ENCODE measurements at regions of chr1 and their contacts with region 1.

Region 1: DNA sequence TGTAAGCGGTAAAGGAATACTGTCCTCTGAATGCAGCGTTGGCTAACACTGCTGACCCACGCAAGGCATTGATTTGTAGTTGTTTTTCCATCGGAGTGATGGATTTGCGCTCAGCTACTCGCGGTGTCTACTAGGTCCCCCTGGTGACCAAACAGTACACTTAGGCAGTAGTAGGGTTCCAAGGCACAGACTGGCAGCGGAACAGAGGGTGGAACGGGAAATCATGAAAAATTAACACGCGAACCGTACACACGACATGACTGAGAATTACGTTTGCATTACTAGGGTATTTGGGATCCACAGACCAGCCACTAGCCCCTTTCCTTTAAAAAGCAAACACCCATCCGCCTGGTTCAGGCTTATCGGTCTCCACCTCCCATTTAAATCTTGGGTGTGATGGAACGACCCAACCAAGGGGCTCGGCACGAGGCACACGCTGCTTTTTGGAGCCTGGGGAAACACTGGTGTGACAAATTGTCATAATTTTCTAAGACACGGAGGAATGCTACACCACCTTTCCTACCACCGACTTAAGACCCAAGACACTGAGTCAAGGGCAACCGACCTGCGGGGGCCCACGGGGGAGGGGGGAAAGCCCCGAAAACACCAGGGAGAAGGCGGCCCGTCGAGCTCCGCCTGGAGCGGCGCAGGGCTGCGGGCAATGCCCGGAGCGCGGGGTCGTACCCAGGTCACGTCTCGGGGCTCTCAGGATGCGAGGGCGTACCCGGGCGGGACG is 699 bp downstream of the DIPK1A start:
- DNase-seq: peak; percentile 44 to 90 (median 57)
- ATAC-seq: peak; percentile 53
- H3K4me3 ChIP-seq: peak overlapping the region; percentile 88
- H3K4me3 Mint-ChIP-seq: peak overlapping the region; percentile 96
- H3K27ac ChIP-seq: peak overlapping the region; percentile 85 to 99
- H3K27ac Mint-ChIP-seq: peak overlapping the region; percentile 99
- H3K4me1 ChIP-seq: peaks cover 66% of the 10 kb centered on the region
- H3K4me1 Mint-ChIP-seq: peaks cover 43% of the 10 kb centered on the region
- H3K27me3 ChIP-seq: no peaks in the 10 kb centered on the region
- H3K27me3 Mint-ChIP-seq: no peaks in the 10 kb centered on the region
- CTCF ChIP-seq: peak; percentile 78

Region 2: DNA sequence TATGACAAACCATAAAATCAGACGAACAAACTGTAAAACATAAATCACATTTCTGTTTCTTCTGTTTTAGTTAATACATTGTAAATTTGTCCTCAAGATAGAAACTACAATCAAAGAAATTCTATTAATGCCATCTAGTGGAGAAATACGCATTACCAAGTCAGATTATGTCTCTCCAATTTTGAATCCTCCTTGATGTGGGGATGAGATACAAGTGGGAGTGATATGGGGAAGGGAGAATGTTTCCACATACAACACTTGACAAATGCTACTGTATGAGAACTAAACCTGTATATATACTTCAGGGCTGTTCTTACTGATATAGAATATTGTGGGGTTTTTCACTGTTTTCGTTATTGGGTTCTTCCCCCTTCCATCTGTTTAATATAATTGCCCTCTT is 1558.5 kb before region 1 on chr1:
- CTCF ChIA-PET with region 1: no interaction called
- POLR2A ChIA-PET with region 1: no interaction called
- intact Hi-C with region 1: no loop called
- DNase-seq: no peak
- ATAC-seq: no peak
- H3K4me3 ChIP-seq: no peak overlapping the region
- H3K4me3 Mint-ChIP-seq: no peak overlapping the region
- H3K27ac ChIP-seq: no peak overlapping the region
- H3K27ac Mint-ChIP-seq: no peak overlapping the region
- H3K4me1 ChIP-seq: peaks cover 10% of the 10 kb centered on the region
- H3K4me1 Mint-ChIP-seq: peaks cover 5% of the 10 kb centered on the region
- H3K27me3 ChIP-seq: peaks cover 12 to 38% of the 10 kb centered on the region in 2 experiments
- H3K27me3 Mint-ChIP-seq: peaks cover 63% of the 10 kb centered on the region
- CTCF ChIP-seq: peak; percentile 45

Region 3: DNA sequence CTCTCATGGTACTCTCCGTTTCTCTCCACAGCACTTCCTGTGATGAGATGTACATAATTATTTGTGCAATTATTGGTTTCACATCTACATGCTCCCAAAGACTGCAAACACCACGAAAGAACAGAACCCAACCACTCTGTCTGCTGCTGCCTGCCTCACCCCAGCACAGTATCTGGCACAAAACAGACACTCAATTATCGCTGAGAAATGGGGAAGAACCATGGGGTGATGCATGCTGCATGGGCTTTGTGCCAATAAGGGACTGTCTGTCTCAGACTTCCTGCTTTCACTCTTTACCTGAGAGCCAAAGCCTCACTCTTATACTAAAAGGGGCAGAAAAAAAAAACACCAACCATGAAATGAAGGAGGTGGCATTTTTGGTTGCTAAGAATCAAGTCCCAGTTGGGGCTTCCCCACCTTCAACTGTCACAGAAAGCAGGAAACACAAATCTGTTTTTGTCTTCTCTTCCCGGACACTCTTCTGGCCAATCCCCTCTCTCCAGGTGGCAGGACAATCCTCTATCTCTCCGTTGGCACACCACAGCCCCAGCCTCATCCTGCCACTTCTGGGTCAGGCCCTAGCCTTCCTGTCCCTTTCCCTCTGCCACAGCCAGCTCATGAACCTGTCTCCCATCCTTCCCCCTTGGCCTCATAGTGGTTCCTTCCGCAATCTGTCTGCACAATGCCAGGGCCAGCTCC is 1156.6 kb before region 1 on chr1:
- CTCF ChIA-PET with region 1: no interaction called
- POLR2A ChIA-PET with region 1: no interaction called
- intact Hi-C with region 1: loop called in 1 of 2 experiments (anchors 5 kb)
- DNase-seq: peak; percentile 49 to 94 (median 68)
- ATAC-seq: peak; percentile 54
- H3K4me3 ChIP-seq: peak overlapping the region; percentile 40
- H3K4me3 Mint-ChIP-seq: peak overlapping the region; percentile 58
- H3K27ac ChIP-seq: peak overlapping the region; percentile 97 to 99
- H3K27ac Mint-ChIP-seq: peak overlapping the region; percentile 94
- H3K4me1 ChIP-seq: peaks cover 43% of the 10 kb centered on the region
- H3K4me1 Mint-ChIP-seq: peaks cover 40% of the 10 kb centered on the region
- H3K27me3 ChIP-seq: no peaks in the 10 kb centered on the region
- H3K27me3 Mint-ChIP-seq: no peaks in the 10 kb centered on the region
- CTCF ChIP-seq: no peak

Region 4: DNA sequence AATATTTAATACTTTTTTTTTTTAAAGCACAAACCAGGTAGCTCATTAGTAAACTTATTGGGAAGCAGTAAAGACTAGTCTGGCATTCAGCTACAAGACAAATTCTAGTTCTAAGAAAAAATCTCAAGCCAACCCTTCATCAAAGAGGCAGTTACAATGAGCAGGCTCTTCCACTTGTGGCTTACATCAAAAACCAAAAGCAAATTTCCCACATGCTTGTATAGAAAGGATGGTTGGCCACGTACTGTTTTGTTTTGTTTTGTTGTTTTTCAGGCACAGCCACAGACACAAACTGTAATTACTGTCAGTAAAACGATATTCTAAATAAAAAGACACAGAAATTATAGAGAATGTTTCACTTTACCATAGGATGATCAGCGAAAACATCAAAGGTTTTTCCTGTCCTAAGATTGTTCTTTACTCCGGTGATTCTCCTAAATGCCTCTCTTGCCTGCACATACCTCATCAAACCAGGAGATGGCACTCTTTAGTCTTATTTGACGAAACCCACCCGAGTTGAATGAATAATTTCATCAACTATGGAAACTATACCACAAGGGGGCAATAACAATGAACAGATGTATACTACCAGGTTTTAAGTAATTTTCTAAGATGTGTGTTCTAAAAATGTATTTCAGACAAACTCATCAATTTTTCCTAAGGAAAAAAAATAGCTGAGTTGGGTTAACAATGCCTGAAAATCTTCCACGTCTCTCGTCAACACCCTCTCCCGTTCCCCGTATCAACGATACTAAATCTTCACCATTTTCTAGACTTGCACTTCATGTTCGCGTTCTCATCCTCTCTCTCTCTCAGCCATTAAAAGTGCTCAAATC is 101.8 kb before region 1 on chr1:
- CTCF ChIA-PET with region 1: interaction called, 101 read pairs
- POLR2A ChIA-PET with region 1: interaction called, 59 read pairs
- intact Hi-C with region 1: loop called (anchors 1 kb)
- DNase-seq: peak in 10 of 14 experiments; percentile 22 to 88 (median 44)
- ATAC-seq: peak; percentile 96
- H3K4me3 ChIP-seq: peak overlapping the region; percentile 34
- H3K4me3 Mint-ChIP-seq: peak overlapping the region; percentile 52
- H3K27ac ChIP-seq: peak overlapping the region in 1 of 2 donors; percentile 1
- H3K27ac Mint-ChIP-seq: peak overlapping the region; percentile 72
- H3K4me1 ChIP-seq: peaks cover 12% of the 10 kb centered on the region
- H3K4me1 Mint-ChIP-seq: peaks cover 14% of the 10 kb centered on the region
- H3K27me3 ChIP-seq: no peaks in the 10 kb centered on the region
- H3K27me3 Mint-ChIP-seq: no peaks in the 10 kb centered on the region
- CTCF ChIP-seq: peak; percentile 99

Region 5: DNA sequence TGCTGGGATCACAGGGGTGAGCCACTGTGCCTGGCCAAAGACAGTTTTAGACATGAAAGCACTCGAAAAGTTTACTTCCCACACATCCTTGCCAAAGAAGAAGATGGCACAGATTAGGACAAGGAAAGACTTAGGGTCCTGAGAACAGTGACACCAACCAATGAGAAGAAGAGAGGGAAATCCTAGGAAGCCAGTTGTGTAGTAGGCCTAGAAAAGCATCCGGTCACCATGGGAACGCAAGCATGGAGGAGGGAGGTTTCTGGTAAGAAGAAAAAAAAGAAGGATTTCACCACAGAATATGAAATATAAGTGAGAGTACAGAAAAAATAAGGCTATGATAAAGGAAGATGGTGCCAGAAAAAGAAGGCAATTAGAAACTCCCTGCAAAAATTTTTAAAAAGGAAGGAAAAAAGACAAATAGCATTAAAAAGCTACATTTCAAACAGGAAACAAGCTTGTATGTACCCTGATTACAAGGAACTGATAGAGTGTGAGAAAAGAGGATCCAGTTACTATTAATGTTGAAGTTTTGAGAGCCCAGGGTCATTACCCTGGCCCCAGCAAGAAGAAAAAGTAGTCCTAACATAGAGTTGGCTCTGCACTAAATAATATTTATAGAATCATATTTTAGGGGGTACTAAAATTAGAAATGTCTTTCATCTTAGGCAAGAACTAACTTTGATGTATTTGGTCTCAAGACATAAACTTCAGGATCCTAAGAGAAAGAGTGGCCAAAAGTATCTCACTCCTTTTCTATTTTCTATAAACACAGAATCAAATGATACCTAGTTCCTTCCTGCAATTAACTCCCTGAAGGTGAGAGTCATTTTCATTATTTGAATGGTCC is 15.4 kb before region 1 on chr1:
- CTCF ChIA-PET with region 1: interaction called, 31 read pairs
- POLR2A ChIA-PET with region 1: interaction called, 42 read pairs
- intact Hi-C with region 1: no loop called
- DNase-seq: no peak
- ATAC-seq: no peak
- H3K4me3 ChIP-seq: no peak overlapping the region
- H3K4me3 Mint-ChIP-seq: no peak overlapping the region
- H3K27ac ChIP-seq: no peak overlapping the region
- H3K27ac Mint-ChIP-seq: no peak overlapping the region
- H3K4me1 ChIP-seq: peaks cover 14% of the 10 kb centered on the region
- H3K4me1 Mint-ChIP-seq: peaks cover 62% of the 10 kb centered on the region
- H3K27me3 ChIP-seq: no peaks in the 10 kb centered on the region
- H3K27me3 Mint-ChIP-seq: no peaks in the 10 kb centered on the region
- CTCF ChIP-seq: no peak

Region 6: DNA sequence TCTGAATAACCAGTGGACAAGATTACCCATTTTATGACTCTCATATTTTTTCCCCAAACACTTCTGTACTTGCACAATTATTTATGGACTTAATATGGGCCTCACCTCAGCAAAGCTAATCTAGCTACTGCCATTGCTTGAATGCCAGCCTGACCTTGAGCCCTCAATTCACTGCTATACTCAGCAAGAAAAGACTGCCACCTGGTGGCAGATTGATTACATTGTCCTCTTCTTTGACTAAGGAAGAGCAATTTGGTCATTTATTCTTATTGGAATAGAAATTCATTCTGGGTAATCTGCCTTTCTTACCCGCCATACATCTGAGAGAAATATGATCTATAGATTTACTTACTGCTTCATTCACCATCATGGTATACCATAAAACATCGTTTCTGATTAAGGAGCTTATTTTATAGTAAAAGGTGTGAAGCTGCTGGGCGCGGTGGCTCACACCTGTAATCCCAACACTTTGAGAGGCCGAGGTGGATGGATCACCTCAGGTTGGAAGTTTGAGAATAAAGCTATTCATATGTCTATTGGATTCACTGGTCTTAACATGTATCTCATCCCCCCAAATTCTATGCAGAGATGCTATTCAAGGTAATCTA is 33.6 kb after region 1 on chr1:
- CTCF ChIA-PET with region 1: interaction called, 105 read pairs
- POLR2A ChIA-PET with region 1: interaction called, 97 read pairs
- intact Hi-C with region 1: loop called (anchors 2 to 5 kb)
- DNase-seq: peak; percentile 20 to 91 (median 68)
- ATAC-seq: peak; percentile 92
- H3K4me3 ChIP-seq: no peak overlapping the region
- H3K4me3 Mint-ChIP-seq: peak overlapping the region; percentile 56
- H3K27ac ChIP-seq: no peak overlapping the region
- H3K27ac Mint-ChIP-seq: peak overlapping the region; percentile 73
- H3K4me1 ChIP-seq: peaks cover 47% of the 10 kb centered on the region
- H3K4me1 Mint-ChIP-seq: peaks cover 48% of the 10 kb centered on the region
- H3K27me3 ChIP-seq: no peaks in the 10 kb centered on the region
- H3K27me3 Mint-ChIP-seq: no peaks in the 10 kb centered on the region
- CTCF ChIP-seq: peak; percentile 91

Region 7: GRCh38 chr1:93179886-93180722 is 219.5 kb after region 1 on chr1 and contains the start of gene TMED5:
- CTCF ChIA-PET with region 1: interaction called, 3 read pairs
- POLR2A ChIA-PET with region 1: interaction called, 4 read pairs
- intact Hi-C with region 1: loop called (anchors 5 kb)
- DNase-seq: peak; percentile 88 to 99 (median 94)
- ATAC-seq: peak; percentile 78
- H3K4me3 ChIP-seq: peak within 1 kb of the TSS; percentile 91
- H3K4me3 Mint-ChIP-seq: peak within 1 kb of the TSS; percentile 93
- H3K27ac ChIP-seq: peak within 1 kb of the TSS; percentile 97 to 98
- H3K27ac Mint-ChIP-seq: peak within 1 kb of the TSS; percentile 95
- H3K4me1 ChIP-seq: peaks cover 25% of the 10 kb centered on the region
- H3K4me1 Mint-ChIP-seq: peaks cover 52% of the 10 kb centered on the region
- H3K27me3 ChIP-seq: no peaks in the 10 kb centered on the region
- H3K27me3 Mint-ChIP-seq: no peaks in the 10 kb centered on the region
- CTCF ChIP-seq: peak; percentile 14
- total RNA-seq, gene TMED5: 42.3 to 43.2 TPM

Region 8: GRCh38 chr1:94417978-94418663 is 1457.6 kb after region 1 on chr1 and contains the start of gene ABCD3:
- CTCF ChIA-PET with region 1: no interaction called
- POLR2A ChIA-PET with region 1: no interaction called
- intact Hi-C with region 1: loop called in 1 of 2 experiments (anchors 10 kb)
- DNase-seq: peak; percentile 92 to 99 (median 97)
- ATAC-seq: peak; percentile 87
- H3K4me3 ChIP-seq: peak within 1 kb of the TSS; percentile 82
- H3K4me3 Mint-ChIP-seq: no peak within 1 kb of the TSS
- H3K27ac ChIP-seq: peak within 1 kb of the TSS; percentile 61 to 77
- H3K27ac Mint-ChIP-seq: no peak within 1 kb of the TSS
- H3K4me1 ChIP-seq: peaks cover 14% of the 10 kb centered on the region
- H3K4me1 Mint-ChIP-seq: peaks cover 41% of the 10 kb centered on the region
- H3K27me3 ChIP-seq: no peaks in the 10 kb centered on the region
- H3K27me3 Mint-ChIP-seq: no peaks in the 10 kb centered on the region
- CTCF ChIP-seq: no peak
- total RNA-seq, gene ABCD3: 13.0 to 13.5 TPM